ENCODE measurements at regions of chr14 and their contacts with region 1.

Region 1: GRCh38 chr14:25411781-25412757 is 362.1 kb upstream of the STXBP6 start:
- DNase-seq: no peak
- H3K4me3 ChIP-seq: no peak overlapping the region
- H3K27ac ChIP-seq: no peak overlapping the region
- H3K4me1 ChIP-seq: no peaks in the 10 kb centered on the region
- H3K27me3 ChIP-seq: no peaks in the 10 kb centered on the region
- CTCF ChIP-seq: no peak
- POLR2A ChIP-seq: no peak

Region 2: GRCh38 chr14:24710403-24711112 is 701.5 kb before region 1 on chr14:
- intact Hi-C with region 1: loop called (anchors 10 kb)
- DNase-seq: no peak
- H3K4me3 ChIP-seq: no peak overlapping the region
- H3K27ac ChIP-seq: no peak overlapping the region
- H3K4me1 ChIP-seq: peaks cover 0 to 17% (median 6%) of the 10 kb centered on the region in 6 donors
- H3K27me3 ChIP-seq: no peaks in the 10 kb centered on the region
- CTCF ChIP-seq: peak; percentile 42 to 86 (median 74)
- POLR2A ChIP-seq: no peak